ENCODE measurements at regions of chr15 and their contacts with region 1.

Region 1: DNA sequence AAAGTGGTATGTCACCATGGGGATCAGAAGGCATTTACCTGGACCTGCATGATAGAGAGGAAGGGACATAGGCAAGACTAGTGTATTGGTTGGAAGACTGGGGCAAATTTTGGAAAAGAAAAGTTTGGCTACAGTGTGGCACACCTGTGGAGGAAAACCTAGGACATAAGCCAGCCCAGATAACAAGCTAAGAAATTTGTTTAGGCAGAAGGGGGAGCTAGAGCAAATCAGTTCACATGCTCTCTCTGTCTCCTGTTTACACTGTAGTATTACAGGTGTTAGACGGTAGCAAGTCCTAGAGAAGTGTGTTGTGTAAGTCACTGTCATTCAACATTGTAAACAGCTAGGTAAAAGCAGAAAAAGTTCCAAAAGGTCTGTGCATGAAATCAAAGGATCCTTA is 11.9 kb upstream of the ALDH1A2 start:
- DNase-seq: no peak
- H3K4me3 ChIP-seq: no peak overlapping the region
- H3K27ac ChIP-seq: no peak overlapping the region
- H3K4me1 ChIP-seq: no peaks in the 10 kb centered on the region
- H3K27me3 ChIP-seq: peaks cover 21% of the 10 kb centered on the region
- CTCF ChIP-seq: no peak
- EP300 ChIP-seq: no peak
- POLR2A ChIP-seq: no peak

Region 2: GRCh38 chr15:56105855-56106254 is 1971.6 kb before region 1 on chr15:
- in situ Hi-C with region 1: no loop called
- intact Hi-C with region 1: no loop called
- DNase-seq: no peak
- H3K4me3 ChIP-seq: no peak overlapping the region
- H3K27ac ChIP-seq: no peak overlapping the region
- H3K4me1 ChIP-seq: peaks cover 0 to 9% (median 0%) of the 10 kb centered on the region in 4 donors
- H3K27me3 ChIP-seq: no peaks in the 10 kb centered on the region
- CTCF ChIP-seq: no peak
- EP300 ChIP-seq: no peak
- POLR2A ChIP-seq: no peak

Region 3: DNA sequence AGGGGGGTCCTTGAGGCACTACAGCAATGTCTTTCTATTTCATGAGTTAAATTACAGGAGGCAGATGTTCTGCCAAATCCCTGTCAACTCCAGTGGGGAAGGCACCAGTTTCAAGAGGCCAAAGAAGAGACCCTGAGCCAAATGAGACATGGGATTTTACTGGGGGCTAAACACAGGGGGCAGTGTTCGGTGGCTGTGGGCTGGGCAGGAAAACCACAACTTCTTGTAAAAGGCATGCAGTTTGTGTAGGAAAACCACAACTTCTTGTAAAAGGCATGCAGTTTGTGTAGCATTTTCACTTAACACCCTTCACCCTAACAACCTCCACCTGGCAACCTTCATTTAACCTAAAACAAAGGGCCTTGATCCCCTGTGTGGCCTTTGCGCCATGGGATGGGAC is 309.9 kb before region 1 on chr15:
- in situ Hi-C with region 1: no loop called
- intact Hi-C with region 1: loop called (anchors 2 kb)
- DNase-seq: no peak
- H3K4me3 ChIP-seq: no peak overlapping the region
- H3K27ac ChIP-seq: no peak overlapping the region
- H3K4me1 ChIP-seq: no peaks in the 10 kb centered on the region
- H3K27me3 ChIP-seq: no peaks in the 10 kb centered on the region
- CTCF ChIP-seq: no peak
- EP300 ChIP-seq: no peak
- POLR2A ChIP-seq: no peak

Measured in transverse colon (tissue), 4 donors.